Naive thymus-derived CD4-positive, alpha-beta T cell (primary cell): ENCODE measurements at regions of chr2 and their contacts with region 1.

Region 1: DNA sequence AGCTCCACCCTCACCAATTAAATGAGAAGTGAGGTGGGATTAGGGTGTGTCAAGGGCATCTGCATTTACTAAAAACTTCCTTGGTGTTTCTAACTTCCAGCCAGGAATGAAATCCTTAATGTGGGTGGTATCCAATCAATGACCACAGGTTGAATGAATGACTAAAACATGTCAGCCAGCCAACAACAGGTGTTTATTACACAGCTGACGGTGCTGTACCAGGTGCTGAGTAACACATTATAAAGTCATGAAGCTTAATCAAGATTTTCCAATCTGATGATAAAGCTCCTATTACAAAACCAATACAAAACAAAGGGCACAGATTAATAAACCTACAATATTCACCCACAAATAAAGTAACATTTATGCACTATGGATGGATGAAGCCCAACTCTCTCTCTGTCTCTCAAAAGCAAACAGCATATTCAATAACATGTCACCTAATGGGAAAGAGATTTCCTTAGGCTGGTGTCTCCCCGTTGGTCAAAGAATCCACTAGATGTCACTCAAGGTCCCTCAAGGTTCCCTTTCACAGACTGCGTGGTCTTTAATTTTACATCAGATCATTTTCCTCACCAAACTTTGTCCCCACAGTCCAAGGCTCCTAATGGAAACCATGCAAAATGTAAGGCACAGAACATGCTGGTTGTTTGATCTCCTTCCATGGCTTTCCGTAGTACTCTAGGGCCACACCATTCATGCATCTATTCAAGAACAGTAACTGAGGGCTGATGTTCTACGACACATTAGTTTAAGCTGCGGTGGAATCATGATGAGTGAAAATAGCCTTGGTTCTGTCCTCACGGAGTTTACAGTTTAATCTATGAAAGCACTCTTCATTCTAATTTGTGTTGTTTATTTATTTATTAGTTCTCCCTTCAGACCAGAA is 6.4 kb upstream of the PTPN4 start:
- DNase-seq: peak in 7 of 9 donors; percentile 35 to 63 (median 52)
- ATAC-seq: peak; percentile 86
- H3K4me3 ChIP-seq: no peak overlapping the region
- H3K4me3 Mint-ChIP-seq: no peak overlapping the region
- H3K27ac ChIP-seq: no peak overlapping the region
- H3K27ac Mint-ChIP-seq: peak overlapping the region in 1 of 9 donors; percentile 37
- H3K4me1 ChIP-seq: no peaks in the 10 kb centered on the region
- H3K4me1 Mint-ChIP-seq: peaks cover under 1 to 10% (median 6%) of the 10 kb centered on the region in 7 donors
- H3K27me3 ChIP-seq: no peaks in the 10 kb centered on the region
- H3K27me3 Mint-ChIP-seq: peaks cover 0 to 23% (median 0%) of the 10 kb centered on the region in 5 donors

Region 2: DNA sequence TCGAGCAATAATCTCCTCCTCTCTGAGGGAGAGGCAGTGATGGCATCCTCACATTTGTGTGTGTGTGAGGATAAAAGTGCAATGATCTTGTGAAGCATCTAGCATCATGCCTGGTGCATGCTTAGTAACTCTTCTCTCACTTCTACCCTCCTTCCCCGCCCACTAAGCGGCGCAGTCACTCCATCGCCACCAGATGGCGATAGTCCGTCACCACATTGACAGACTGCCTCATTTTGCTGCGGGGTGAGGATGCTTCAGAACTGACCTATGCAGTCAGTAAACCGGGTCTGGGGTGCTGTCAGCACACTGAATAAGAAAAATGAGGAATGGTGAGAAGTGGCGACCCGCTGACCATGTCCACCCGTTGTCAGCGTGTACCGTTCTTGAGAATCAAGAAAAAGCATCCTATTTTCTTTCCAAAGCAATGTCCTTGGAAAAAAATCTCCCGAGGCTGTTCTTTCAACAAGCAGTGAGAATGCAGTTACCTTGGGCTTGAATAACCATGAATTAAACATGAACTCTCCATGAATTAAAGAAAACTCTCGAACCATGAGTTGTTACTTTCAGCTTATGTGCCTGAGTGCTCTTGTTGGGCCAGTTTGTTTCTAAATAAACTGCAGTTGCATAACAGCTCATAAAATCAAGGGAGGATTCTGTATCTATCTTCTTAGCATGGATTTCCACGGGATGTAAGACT is 111.6 kb before region 1 on chr2:
- CTCF ChIA-PET with region 1: interaction called, 6 read pairs
- POLR2A ChIA-PET with region 1: no interaction called
- intact Hi-C with region 1: loop called in 1 of 2 experiments (anchors 1 kb)
- DNase-seq: peak; percentile 42 to 77 (median 64)
- ATAC-seq: peak; percentile 95
- H3K4me3 ChIP-seq: no peak overlapping the region
- H3K4me3 Mint-ChIP-seq: no peak overlapping the region
- H3K27ac ChIP-seq: no peak overlapping the region
- H3K27ac Mint-ChIP-seq: no peak overlapping the region
- H3K4me1 ChIP-seq: peaks cover 0 to 4% of the 10 kb centered on the region in 2 donors
- H3K4me1 Mint-ChIP-seq: peaks cover 0 to 13% (median 5%) of the 10 kb centered on the region in 7 donors
- H3K27me3 ChIP-seq: no peaks in the 10 kb centered on the region
- H3K27me3 Mint-ChIP-seq: peaks cover 0 to 14% (median 0%) of the 10 kb centered on the region in 5 donors

Region 3: DNA sequence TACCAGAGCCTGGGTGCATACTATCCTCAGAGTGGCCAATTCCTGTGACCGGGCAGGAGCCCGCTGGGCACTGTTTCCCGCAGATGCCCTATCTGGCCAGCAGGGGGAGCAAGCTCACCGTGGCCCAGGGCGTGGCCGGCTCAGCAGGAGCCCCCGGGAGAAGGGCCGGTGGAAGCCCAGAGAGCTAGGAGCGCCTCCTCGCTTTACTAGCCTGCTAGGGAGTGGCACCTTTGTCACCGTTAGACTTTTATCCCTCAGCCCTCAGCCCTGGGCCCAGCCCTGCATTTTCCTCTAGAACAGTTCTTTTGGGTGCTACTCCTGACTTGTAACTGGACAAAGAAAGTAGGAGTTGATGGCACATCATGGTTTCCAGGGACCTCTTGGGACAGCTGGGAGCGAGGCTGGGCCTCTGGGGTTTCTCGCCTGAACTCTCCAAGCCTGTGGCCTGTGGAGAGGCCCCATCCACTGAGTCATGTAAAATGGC is 50.3 kb before region 1 on chr2:
- CTCF ChIA-PET with region 1: no interaction called
- POLR2A ChIA-PET with region 1: no interaction called
- intact Hi-C with region 1: loop called in 1 of 2 experiments (anchors 2 kb)
- DNase-seq: peak; percentile 26 to 69 (median 53)
- ATAC-seq: peak; percentile 92
- H3K4me3 ChIP-seq: peak overlapping the region; percentile 16
- H3K4me3 Mint-ChIP-seq: no peak overlapping the region
- H3K27ac ChIP-seq: no peak overlapping the region
- H3K27ac Mint-ChIP-seq: peak overlapping the region in 2 of 9 donors; percentile 6 to 56
- H3K4me1 ChIP-seq: peaks cover 6 to 9% of the 10 kb centered on the region in 2 donors
- H3K4me1 Mint-ChIP-seq: peaks cover 0 to 23% (median 13%) of the 10 kb centered on the region in 7 donors
- H3K27me3 ChIP-seq: no peaks in the 10 kb centered on the region
- H3K27me3 Mint-ChIP-seq: peaks cover 0 to 4% (median 0%) of the 10 kb centered on the region in 5 donors

Region 4: GRCh38 chr2:119795309-119796303 is 42.3 kb after region 1 on chr2:
- CTCF ChIA-PET with region 1: interaction called, 3 read pairs
- POLR2A ChIA-PET with region 1: interaction called, 10 read pairs
- intact Hi-C with region 1: no loop called
- DNase-seq: no peak
- ATAC-seq: no peak
- H3K4me3 ChIP-seq: no peak overlapping the region
- H3K4me3 Mint-ChIP-seq: peak overlapping the region in 1 of 10 donors; percentile 19
- H3K27ac ChIP-seq: no peak overlapping the region
- H3K27ac Mint-ChIP-seq: peak overlapping the region in 3 of 9 donors; percentile 14 to 69 (median 58)
- H3K4me1 ChIP-seq: peaks cover 0 to 4% of the 10 kb centered on the region in 2 donors
- H3K4me1 Mint-ChIP-seq: peaks cover 2 to 71% (median 55%) of the 10 kb centered on the region in 7 donors
- H3K27me3 ChIP-seq: no peaks in the 10 kb centered on the region
- H3K27me3 Mint-ChIP-seq: no peaks in the 10 kb centered on the region

Region 5: GRCh38 chr2:119826370-119826961 is 73.2 kb after region 1 on chr2:
- CTCF ChIA-PET with region 1: interaction called, 88 read pairs
- POLR2A ChIA-PET with region 1: interaction called, 6 read pairs
- intact Hi-C with region 1: loop called (anchors 1 kb)
- DNase-seq: peak in 7 of 9 donors; percentile 10 to 53 (median 28)
- ATAC-seq: peak; percentile 82
- H3K4me3 ChIP-seq: no peak overlapping the region
- H3K4me3 Mint-ChIP-seq: no peak overlapping the region
- H3K27ac ChIP-seq: no peak overlapping the region
- H3K27ac Mint-ChIP-seq: peak overlapping the region in 4 of 9 donors; percentile 32 to 67 (median 45)
- H3K4me1 ChIP-seq: peaks cover 0 to 8% of the 10 kb centered on the region in 2 donors
- H3K4me1 Mint-ChIP-seq: peaks cover 22 to 76% (median 59%) of the 10 kb centered on the region in 7 donors
- H3K27me3 ChIP-seq: no peaks in the 10 kb centered on the region
- H3K27me3 Mint-ChIP-seq: no peaks in the 10 kb centered on the region

Region 6: GRCh38 chr2:119958670-119959268 is 205.5 kb after region 1 on chr2:
- CTCF ChIA-PET with region 1: no interaction called
- POLR2A ChIA-PET with region 1: no interaction called
- intact Hi-C with region 1: loop called in 1 of 2 experiments (anchors 5 kb)
- DNase-seq: no peak
- ATAC-seq: no peak
- H3K4me3 ChIP-seq: no peak overlapping the region
- H3K4me3 Mint-ChIP-seq: no peak overlapping the region
- H3K27ac ChIP-seq: no peak overlapping the region
- H3K27ac Mint-ChIP-seq: peak overlapping the region in 5 of 9 donors; percentile 9 to 80 (median 50)
- H3K4me1 ChIP-seq: peaks cover 0 to 7% of the 10 kb centered on the region in 2 donors
- H3K4me1 Mint-ChIP-seq: peaks cover 0 to 17% (median 1%) of the 10 kb centered on the region in 7 donors
- H3K27me3 ChIP-seq: no peaks in the 10 kb centered on the region
- H3K27me3 Mint-ChIP-seq: no peaks in the 10 kb centered on the region

Region 7: DNA sequence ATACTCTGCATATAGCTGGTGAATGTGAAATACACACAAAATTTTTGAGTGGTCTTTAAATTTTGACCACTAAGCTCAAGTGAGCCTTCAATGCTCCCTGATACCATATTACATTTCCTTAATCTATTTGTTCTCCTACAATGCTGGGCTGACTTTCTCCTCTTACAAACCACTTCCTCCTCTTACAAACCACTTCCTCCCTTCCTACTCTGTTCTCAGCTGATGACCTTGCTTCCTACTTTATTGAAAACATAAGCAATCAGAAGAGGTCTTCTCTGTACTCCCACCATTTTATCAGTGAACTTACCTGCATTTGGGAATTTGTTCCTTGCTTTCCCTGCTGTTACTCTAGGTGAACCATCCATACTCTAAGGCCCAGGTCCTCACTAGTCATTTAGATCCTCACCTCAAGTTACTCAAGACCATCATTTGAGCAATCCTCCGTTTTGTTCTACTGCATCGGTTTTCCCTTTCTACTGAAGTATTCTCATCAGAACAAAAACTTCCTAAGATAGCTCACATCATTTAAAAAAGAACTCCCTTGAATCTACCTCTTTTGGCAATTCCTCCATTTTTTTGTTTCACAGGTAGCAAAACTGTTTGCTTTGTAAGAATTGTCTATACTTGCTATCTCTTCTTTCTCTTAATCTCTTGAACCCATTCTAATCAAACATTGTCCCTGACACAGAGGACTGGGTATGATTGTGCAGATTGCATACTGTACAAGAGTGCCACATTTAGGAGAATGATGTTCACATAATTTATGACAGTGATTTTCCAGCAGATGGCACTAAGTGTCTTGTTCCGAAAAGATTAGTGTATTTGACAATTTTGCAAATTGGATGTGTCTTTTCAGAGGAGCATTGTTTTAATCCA is 356.1 kb after region 1 on chr2:
- CTCF ChIA-PET with region 1: no interaction called
- POLR2A ChIA-PET with region 1: no interaction called
- intact Hi-C with region 1: loop called (anchors 1 to 5 kb)
- DNase-seq: peak in 7 of 9 donors; percentile 14 to 73 (median 67)
- ATAC-seq: peak; percentile 80
- H3K4me3 ChIP-seq: peak overlapping the region; percentile 34
- H3K4me3 Mint-ChIP-seq: peak overlapping the region; percentile 30 to 87 (median 70)
- H3K27ac ChIP-seq: peak overlapping the region; percentile 39
- H3K27ac Mint-ChIP-seq: peak overlapping the region; percentile 10 to 90 (median 72)
- H3K4me1 ChIP-seq: peaks cover 17 to 21% of the 10 kb centered on the region in 2 donors
- H3K4me1 Mint-ChIP-seq: peaks cover 19 to 44% (median 36%) of the 10 kb centered on the region in 7 donors
- H3K27me3 ChIP-seq: no peaks in the 10 kb centered on the region
- H3K27me3 Mint-ChIP-seq: peaks cover 0 to 33% (median 0%) of the 10 kb centered on the region in 5 donors